ENCODE measurements at regions of chr18 and their contacts with region 1.

Region 1: GRCh38 chr18:11937874-11938478 is 29.9 kb upstream of the MPPE1 start:
- DNase-seq: peak; percentile 75 to 89
- ATAC-seq: peak; percentile 87
- H3K4me3 ChIP-seq: no peak overlapping the region
- H3K27ac ChIP-seq: no peak overlapping the region
- H3K4me1 ChIP-seq: no peaks in the 10 kb centered on the region
- H3K27me3 ChIP-seq: no peaks in the 10 kb centered on the region

Region 2: GRCh38 chr18:11872479-11873136 is 65.4 kb before region 1 on chr18:
- intact Hi-C with region 1: no loop called
- DNase-seq: no peak
- ATAC-seq: no peak
- H3K4me3 ChIP-seq: no peak overlapping the region
- H3K27ac ChIP-seq: no peak overlapping the region
- H3K4me1 ChIP-seq: no peaks in the 10 kb centered on the region
- H3K27me3 ChIP-seq: no peaks in the 10 kb centered on the region

Region 3: DNA sequence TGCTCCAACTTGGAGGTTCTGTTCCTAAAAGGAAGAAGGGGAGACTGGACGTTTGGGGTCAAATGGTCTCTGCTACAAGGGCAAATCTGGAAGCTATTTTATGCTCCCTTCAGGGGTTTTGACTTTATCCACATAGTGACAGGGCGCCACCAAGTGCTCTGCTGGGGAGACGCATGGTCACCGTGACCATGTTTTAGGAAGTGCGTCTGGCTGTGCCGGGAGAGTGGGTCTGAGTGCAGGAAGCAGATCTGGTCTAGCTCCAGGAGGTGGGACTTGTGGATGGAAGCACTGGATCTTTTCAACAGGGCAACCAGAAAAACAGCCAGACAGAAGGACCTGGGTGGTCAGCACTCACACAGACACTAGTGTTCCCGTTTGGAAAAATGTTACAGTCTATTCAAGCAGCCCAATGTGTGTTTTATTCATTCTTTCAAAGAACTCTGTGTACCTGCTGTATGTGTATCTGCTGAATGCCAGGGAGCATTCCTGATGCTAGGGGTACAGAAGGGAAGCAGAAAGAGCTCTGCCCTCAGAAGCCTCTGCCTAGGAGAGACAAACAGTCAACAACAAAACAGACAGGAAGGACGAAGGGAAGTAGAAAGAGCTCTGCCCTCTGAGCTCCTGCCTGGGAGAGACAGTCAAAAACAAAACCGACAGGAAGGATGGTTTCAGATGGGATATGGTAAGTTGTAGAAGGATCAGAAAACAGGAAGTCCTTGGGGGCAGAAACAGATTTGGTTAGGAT is 57.6 kb after region 1 on chr18:
- intact Hi-C with region 1: loop called (anchors 1 to 2 kb)
- DNase-seq: peak; percentile 88
- ATAC-seq: peak; percentile 89
- H3K4me3 ChIP-seq: no peak overlapping the region
- H3K27ac ChIP-seq: no peak overlapping the region
- H3K4me1 ChIP-seq: no peaks in the 10 kb centered on the region
- H3K27me3 ChIP-seq: no peaks in the 10 kb centered on the region

Region 4: DNA sequence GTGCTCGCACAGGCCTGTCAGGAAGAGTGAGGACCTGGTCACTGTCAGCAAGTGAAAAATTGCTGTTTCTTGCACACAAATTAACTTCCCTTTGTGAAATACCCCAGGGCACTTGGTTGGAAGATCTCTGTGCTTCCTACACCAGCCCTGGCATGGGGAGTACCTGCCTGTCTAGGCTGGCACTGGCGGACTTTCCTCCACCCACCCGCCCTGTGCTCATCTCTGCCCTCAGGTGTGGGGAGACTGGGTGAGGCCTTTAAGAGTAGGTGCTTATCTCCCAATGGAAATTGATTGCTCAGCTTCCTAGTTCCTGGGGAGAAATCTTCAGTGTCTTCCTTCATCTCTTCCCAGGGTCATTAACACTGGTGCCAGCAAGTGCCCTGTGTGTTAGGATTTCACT is 85.4 kb after region 1 on chr18:
- intact Hi-C with region 1: no loop called
- DNase-seq: peak in 1 of 2 donors; percentile 61
- ATAC-seq: no peak
- H3K4me3 ChIP-seq: no peak overlapping the region
- H3K27ac ChIP-seq: no peak overlapping the region
- H3K4me1 ChIP-seq: no peaks in the 10 kb centered on the region
- H3K27me3 ChIP-seq: no peaks in the 10 kb centered on the region

Region 5: DNA sequence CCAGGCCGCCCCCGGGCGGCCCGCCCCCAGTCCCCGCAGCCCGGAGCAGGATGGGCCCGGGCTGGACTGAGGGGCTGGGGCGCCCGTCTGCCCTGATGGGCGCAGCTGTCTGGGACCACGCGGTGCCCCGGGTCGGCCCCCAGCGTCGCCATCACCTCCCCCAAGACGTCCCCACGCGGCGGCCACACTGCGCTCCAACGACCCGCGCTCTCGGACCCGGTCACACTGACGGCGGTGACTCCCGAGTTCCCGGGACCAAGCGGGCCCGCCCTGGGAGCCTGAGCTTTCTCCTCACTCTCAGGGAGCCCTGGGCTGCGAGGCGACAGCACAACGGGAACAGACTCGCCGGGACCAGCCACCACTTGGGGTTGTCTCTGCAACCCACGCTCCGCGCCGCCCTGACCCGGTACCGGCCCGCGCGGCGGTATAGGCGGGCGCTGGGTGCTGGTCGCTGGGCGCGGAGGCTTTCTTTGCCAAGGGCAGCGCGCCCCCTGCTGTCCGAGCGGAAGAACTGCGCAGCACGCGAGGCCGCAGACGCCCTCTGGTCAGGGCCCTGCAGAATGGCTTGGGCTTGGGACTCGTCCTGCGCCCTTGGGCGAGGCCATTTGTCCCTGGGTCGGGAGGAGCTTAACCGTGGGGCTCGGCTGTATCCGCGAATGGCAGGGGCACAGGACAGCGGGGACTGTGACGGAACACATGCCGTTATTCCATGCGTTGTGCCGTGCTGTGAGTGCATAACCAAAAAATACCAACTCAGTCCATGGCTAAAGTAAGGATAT is 100.9 kb after region 1 on chr18:
- intact Hi-C with region 1: loop called (anchors 2 to 10 kb)
- DNase-seq: peak; percentile 87 to 94
- ATAC-seq: peak; percentile 98
- H3K4me3 ChIP-seq: peak overlapping the region; percentile 2 to 58
- H3K27ac ChIP-seq: no peak overlapping the region
- H3K4me1 ChIP-seq: no peaks in the 10 kb centered on the region
- H3K27me3 ChIP-seq: no peaks in the 10 kb centered on the region

Measured in aorta (tissue), 5 donors.